Astrocyte of the cerebellum (primary cell): ENCODE measurements at regions of chr14 and their contacts with region 1.

Region 1: GRCh38 chr14:74290415-74290814 is 12.3 kb downstream of the ABCD4 start:
- DNase-seq: no peak
- H3K4me3 ChIP-seq: no peak overlapping the region
- CTCF ChIP-seq: peak; percentile 51

Region 2: DNA sequence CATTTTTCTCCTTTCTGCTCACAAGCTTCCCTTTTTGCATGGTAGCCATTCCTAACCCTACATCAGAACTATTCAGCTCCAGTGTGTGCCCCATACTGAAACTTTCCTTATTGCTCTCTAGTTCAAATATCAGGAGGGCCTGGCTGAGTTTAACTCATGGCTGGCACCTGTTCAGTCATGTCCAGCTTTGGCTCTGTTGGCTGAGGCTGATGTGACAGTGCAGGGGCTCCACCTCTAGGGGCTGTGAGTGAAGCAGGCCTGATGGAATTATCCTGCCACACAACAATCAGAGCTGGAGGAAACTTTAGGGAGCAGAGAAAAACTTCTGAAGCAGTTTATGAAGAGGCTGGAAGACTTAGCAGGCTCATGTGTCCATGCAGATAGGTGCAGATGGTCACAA is 331.8 kb before region 1 on chr14:
- in situ Hi-C with region 1: no loop called
- DNase-seq: no peak
- H3K4me3 ChIP-seq: no peak overlapping the region
- CTCF ChIP-seq: no peak

Region 3: DNA sequence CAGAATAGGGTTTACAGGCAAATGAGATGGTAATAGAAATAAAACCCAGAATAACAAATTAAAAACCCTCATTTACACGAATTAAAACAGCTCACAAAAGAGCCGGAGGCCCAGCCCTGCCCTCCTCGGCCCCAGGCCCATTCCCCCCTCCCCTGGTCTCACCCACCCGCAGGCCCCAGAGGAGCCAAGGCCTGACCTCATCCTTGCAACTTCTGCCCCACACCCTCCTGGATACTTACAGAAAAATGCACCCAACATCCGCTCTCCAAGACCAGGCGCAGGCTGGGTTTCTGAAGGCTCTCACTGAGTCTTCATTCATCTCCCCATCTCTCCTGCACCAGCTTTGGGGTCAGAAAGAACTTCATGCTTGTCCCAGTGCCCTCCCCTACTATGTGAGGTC is 67.4 kb before region 1 on chr14:
- in situ Hi-C with region 1: loop called (anchors 5 kb)
- DNase-seq: no peak
- H3K4me3 ChIP-seq: no peak overlapping the region
- CTCF ChIP-seq: no peak

Region 4: GRCh38 chr14:74349757-74350156 is 59.3 kb after region 1 on chr14:
- in situ Hi-C with region 1: loop called (anchors 10 kb)
- DNase-seq: no peak
- H3K4me3 ChIP-seq: no peak overlapping the region
- CTCF ChIP-seq: no peak